Mammary epithelial cell (primary cell): ENCODE measurements at regions of chr12 and their contacts with region 1.

Region 1: DNA sequence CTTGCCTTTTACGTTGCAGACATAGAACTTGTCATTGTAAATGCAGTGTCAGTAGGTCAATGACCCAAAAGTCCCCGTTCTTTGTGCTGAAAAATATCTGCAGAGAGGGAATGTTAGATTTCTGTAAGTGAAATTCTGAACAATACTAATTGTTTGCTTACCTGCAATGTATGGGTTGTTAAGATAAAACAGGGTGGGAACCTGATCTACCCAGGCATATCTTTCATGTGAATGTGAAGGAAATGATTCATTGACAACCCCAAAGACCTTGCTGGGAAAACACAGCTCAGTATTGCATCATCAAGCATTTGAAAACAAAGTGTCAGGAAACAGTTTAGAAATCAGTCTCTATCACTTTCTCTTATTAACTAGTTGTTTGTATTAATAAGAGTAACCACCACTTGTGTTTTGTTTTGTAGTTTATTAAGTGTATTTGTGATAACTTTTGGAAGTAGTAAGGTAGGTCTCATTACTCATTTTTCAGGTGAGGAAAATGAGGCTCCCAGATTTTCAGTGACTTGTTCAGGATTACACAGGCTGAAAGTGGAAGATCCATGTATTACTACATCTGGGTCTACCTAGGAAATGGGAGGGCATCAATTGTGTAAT is 57.9 kb upstream of the SLC38A2 start:
- DNase-seq: peak; percentile 92
- H3K4me3 ChIP-seq: peak overlapping the region in 1 of 3 experiments; percentile 23
- H3K27ac ChIP-seq: peak overlapping the region; percentile 100
- H3K4me1 ChIP-seq: peaks cover 35% of the 10 kb centered on the region
- H3K27me3 ChIP-seq: no peaks in the 10 kb centered on the region
- CTCF ChIP-seq: no peak

Region 2: GRCh38 chr12:45122768-45123380 is 1307.6 kb before region 1 on chr12:
- CTCF ChIA-PET with region 1: no interaction called
- dilution Hi-C with region 1: no loop called
- in situ Hi-C with region 1: no loop called
- intact Hi-C with region 1: no loop called
- DNase-seq: peak; percentile 27
- H3K4me3 ChIP-seq: no peak overlapping the region
- H3K27ac ChIP-seq: no peak overlapping the region
- H3K4me1 ChIP-seq: no peaks in the 10 kb centered on the region
- H3K27me3 ChIP-seq: no peaks in the 10 kb centered on the region
- CTCF ChIP-seq: peak; percentile 44 to 68

Region 3: DNA sequence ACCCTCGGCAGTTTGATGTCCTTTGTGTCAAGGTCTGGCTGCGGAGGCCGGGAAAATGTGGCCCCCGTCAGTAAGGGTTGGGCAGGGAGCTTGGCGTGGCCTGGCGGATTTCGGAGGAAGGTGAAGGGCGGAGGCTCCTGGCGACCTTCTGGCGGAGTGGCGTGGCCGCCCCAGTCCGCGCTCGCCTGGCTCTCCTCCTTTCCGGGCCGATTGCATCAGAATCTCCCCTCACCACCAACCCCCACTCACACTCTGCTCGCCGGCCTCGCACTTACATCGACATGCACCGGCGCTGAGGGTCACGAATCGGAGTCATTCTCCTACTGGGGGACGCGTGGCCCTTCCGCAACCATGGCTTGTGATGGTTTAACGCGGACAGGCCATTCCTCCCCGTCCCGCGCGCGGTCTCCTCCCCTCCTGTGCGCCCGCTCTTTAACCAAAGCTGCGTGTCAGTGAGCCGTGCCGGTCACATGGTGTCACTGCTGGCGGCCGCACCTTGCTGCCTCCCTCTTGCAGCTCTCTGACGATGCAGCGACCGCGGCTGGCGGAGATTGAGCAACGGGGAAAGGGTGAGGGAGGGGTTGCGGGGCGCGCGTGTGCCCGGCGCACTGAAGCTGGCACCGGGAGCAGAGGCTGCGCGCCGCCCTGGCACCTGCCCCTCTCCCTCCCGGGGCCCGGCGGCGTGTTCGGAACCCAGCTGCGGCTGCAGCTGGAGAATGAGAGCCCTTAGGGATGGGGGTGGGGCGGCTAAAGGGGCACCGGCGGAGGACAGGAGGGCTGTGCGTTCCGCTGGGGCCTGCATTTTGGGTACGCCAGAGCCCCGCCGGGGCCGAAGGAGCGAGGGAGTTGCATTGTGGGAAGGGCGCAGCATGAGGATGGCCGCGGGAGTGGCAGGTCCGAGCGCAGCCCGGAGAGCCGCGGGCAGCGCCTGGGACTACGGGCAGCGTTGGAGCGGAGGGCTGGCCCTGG is 161.6 kb before region 1 on chr12 and contains the start of gene SLC38A1:
- CTCF ChIA-PET with region 1: no interaction called
- dilution Hi-C with region 1: no loop called
- in situ Hi-C with region 1: no loop called
- intact Hi-C with region 1: loop called (anchors 5 kb)
- DNase-seq: peak; percentile 88
- H3K4me3 ChIP-seq: peak within 1 kb of the TSS; percentile 51 to 97 (median 95)
- H3K27ac ChIP-seq: peak within 1 kb of the TSS; percentile 96
- H3K4me1 ChIP-seq: peaks cover 31% of the 10 kb centered on the region
- H3K27me3 ChIP-seq: no peaks in the 10 kb centered on the region
- CTCF ChIP-seq: peak in 1 of 2 donors; percentile 17
- total RNA-seq, gene SLC38A1: 208 to 360 TPM

Region 4: GRCh38 chr12:46364777-46365580 is 65.5 kb before region 1 on chr12:
- CTCF ChIA-PET with region 1: no interaction called
- dilution Hi-C with region 1: loop called (anchors 5 kb)
- in situ Hi-C with region 1: no loop called
- intact Hi-C with region 1: no loop called
- DNase-seq: peak; percentile 73
- H3K4me3 ChIP-seq: no peak overlapping the region
- H3K27ac ChIP-seq: peak overlapping the region; percentile 46
- H3K4me1 ChIP-seq: peaks cover 48% of the 10 kb centered on the region
- H3K27me3 ChIP-seq: no peaks in the 10 kb centered on the region
- CTCF ChIP-seq: no peak

Region 5: GRCh38 chr12:46372544-46373110 is 57.8 kb before region 1 on chr12 and contains the start of gene SLC38A2:
- CTCF ChIA-PET with region 1: no interaction called
- dilution Hi-C with region 1: loop called (anchors 5 kb)
- in situ Hi-C with region 1: no loop called
- intact Hi-C with region 1: loop called (anchors 1 kb)
- DNase-seq: peak; percentile 91
- H3K4me3 ChIP-seq: peak within 1 kb of the TSS; percentile 91 to 95 (median 92)
- H3K27ac ChIP-seq: peak within 1 kb of the TSS; percentile 98
- H3K4me1 ChIP-seq: peaks cover 27% of the 10 kb centered on the region
- H3K27me3 ChIP-seq: no peaks in the 10 kb centered on the region
- CTCF ChIP-seq: no peak
- total RNA-seq, gene SLC38A2: 774 to 995 TPM

Region 6: GRCh38 chr12:46382964-46383653 is 47.3 kb before region 1 on chr12:
- CTCF ChIA-PET with region 1: no interaction called
- dilution Hi-C with region 1: no loop called
- in situ Hi-C with region 1: no loop called
- intact Hi-C with region 1: loop called (anchors 1 kb)
- DNase-seq: peak; percentile 95
- H3K4me3 ChIP-seq: peak overlapping the region; percentile 60 to 68 (median 64)
- H3K27ac ChIP-seq: peak overlapping the region; percentile 96
- H3K4me1 ChIP-seq: peaks cover 50% of the 10 kb centered on the region
- H3K27me3 ChIP-seq: no peaks in the 10 kb centered on the region
- CTCF ChIP-seq: peak in 1 of 2 donors; percentile 8

Region 7: DNA sequence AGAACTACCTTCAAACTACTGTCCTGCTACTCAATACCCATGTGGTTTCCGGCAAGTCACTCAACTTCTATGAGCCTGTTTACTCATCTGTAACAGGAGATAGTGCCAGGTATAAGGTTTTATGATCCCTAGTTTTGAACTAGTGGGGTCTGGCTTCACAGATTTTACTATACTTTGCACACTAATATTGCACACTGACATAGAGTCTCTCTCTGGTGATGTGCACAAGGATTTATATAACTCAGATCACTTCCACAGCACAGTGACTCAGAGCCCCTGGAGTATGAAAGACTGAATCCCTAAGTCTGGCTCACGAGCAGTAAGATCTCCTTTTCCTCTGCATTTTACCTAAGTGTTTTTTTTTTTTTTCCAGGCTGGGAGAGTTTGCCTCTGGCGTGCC is 11.8 kb after region 1 on chr12:
- CTCF ChIA-PET with region 1: no interaction called
- dilution Hi-C with region 1: no loop called
- in situ Hi-C with region 1: no loop called
- intact Hi-C with region 1: loop called (anchors 1 kb)
- DNase-seq: peak; percentile 73
- H3K4me3 ChIP-seq: peak overlapping the region in 2 of 3 experiments; percentile 7 to 10
- H3K27ac ChIP-seq: peak overlapping the region; percentile 96
- H3K4me1 ChIP-seq: peaks cover 60% of the 10 kb centered on the region
- H3K27me3 ChIP-seq: no peaks in the 10 kb centered on the region
- CTCF ChIP-seq: no peak

Region 8: DNA sequence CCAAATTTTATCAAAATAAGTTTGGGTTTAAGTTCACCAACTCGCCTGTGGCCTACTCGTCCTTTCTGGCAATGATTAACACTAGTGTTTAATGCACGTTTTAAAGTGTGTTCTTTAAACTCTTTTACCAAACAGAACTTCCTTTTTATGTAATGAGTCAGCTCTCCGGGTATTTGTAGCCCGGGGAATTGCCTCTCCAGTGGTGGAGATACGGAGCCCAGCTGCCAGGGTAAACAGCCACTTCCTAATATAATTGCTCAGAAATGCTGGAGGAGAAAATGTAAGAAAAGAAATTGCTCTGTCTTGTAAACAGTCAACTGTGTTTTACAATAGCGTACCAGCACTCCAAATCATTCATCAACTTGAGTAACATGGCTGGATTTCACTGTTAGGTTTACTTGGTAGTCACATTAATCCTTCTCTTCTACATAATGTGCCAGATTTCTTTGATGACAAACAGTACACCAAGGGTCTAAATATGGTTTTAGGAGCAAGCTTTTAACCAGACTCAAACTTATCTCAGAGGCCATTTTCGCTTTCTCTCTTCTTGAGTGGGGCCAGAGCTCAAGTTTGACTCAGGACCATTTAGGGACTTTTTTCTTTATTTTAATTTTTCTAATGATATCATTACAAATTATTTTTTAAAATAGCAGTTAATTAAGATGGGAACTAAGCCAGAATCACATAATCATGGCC is 43.3 kb after region 1 on chr12:
- CTCF ChIA-PET with region 1: no interaction called
- dilution Hi-C with region 1: loop called (anchors 5 kb)
- in situ Hi-C with region 1: no loop called
- intact Hi-C with region 1: no loop called
- DNase-seq: peak; percentile 83
- H3K4me3 ChIP-seq: peak overlapping the region in 1 of 3 experiments; percentile 11
- H3K27ac ChIP-seq: peak overlapping the region; percentile 67
- H3K4me1 ChIP-seq: peaks cover 38% of the 10 kb centered on the region
- H3K27me3 ChIP-seq: no peaks in the 10 kb centered on the region
- CTCF ChIP-seq: no peak

Region 9: DNA sequence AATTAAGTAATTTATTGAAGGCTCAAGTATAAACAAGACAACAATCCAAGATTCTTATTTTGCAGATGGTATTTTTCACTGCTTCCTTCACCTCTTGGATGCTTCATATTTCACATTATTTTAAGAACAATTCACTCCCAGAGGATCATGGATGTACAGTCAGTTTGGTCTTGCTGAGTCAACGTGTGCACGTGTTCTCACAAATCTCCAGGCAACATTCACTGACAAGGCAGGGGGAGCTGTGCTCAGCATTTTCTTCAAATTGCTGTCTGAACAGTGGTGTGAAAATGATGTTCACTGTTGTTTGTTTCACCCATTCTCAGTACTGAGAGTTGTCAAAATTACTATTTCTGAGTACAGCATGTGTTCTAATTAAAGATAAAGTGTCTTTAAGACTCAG is 513.6 kb after region 1 on chr12:
- CTCF ChIA-PET with region 1: no interaction called
- dilution Hi-C with region 1: no loop called
- in situ Hi-C with region 1: no loop called
- intact Hi-C with region 1: no loop called
- DNase-seq: peak; percentile 70
- H3K4me3 ChIP-seq: no peak overlapping the region
- H3K27ac ChIP-seq: no peak overlapping the region
- H3K4me1 ChIP-seq: peaks cover 20% of the 10 kb centered on the region
- H3K27me3 ChIP-seq: no peaks in the 10 kb centered on the region
- CTCF ChIP-seq: peak in 1 of 2 donors; percentile 58